ENCODE measurements at regions of chr11 and their contacts with region 1.

Region 1: DNA sequence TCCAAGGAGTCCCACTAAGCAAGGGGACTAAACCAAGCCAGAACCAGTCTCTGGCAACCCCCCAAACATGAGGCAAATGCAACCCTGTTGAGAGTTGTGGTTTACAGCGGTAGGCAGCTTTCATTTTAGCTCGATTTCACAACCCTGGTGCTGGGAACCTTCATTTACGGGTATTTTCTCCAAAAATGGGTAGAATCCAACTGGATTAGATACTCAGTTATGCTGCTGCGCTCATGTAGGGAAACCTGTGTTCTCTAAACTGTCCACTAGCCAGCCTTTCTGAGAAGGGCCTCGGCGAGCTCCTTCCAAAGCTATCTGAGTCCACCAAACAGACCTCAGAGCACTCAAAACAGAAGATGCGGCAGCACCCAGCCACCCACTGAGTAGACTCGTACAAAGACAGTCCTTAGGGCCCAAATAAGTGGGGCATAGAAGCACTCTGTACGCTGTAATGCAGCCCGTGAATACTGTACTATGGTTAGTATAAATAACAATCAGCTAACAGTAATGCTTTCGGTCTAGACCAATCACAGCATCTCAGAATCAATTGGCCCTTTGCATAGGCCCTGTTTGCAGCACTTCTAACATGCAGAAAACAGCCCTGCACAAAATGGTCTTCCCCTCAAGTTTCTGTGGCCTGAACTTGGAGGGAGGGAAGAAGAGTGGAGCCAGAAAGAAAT is 104.7 kb downstream of the ETS1 start:
- DNase-seq: no peak
- H3K4me3 ChIP-seq: no peak overlapping the region
- H3K27ac ChIP-seq: peak overlapping the region; percentile 3
- H3K4me1 ChIP-seq: peaks cover 24% of the 10 kb centered on the region
- H3K27me3 ChIP-seq: no peaks in the 10 kb centered on the region
- CTCF ChIP-seq: no peak

Region 2: GRCh38 chr11:128424851-128425285 is 57.8 kb before region 1 on chr11:
- CTCF ChIA-PET with region 1: no interaction called
- dilution Hi-C with region 1: loop called (anchors 5 kb)
- in situ Hi-C with region 1: no loop called
- intact Hi-C with region 1: no loop called
- DNase-seq: no peak
- H3K4me3 ChIP-seq: no peak overlapping the region
- H3K27ac ChIP-seq: no peak overlapping the region
- H3K4me1 ChIP-seq: no peaks in the 10 kb centered on the region
- H3K27me3 ChIP-seq: no peaks in the 10 kb centered on the region
- CTCF ChIP-seq: no peak

Region 3: DNA sequence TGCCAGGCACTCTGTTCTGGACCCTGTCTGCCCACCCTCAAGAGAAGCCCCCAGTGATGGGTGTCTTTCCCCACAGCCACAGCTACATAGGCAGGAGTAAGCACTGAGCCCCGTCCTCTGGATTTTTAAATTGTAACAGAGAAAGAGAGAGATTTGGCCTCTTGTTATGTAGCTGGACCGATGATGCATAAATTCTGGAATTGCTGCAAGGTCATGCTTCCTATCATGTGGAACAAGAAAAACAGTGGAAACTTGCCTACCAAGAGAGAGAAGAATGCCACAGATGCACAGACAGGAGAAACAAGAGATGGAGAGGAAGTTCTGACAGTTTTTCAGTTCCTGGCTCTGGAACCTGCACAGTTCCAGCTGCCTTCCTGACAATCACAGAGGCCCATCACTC is 45.5 kb before region 1 on chr11:
- CTCF ChIA-PET with region 1: no interaction called
- dilution Hi-C with region 1: no loop called
- in situ Hi-C with region 1: no loop called
- intact Hi-C with region 1: no loop called
- DNase-seq: no peak
- H3K4me3 ChIP-seq: no peak overlapping the region
- H3K27ac ChIP-seq: no peak overlapping the region
- H3K4me1 ChIP-seq: no peaks in the 10 kb centered on the region
- H3K27me3 ChIP-seq: no peaks in the 10 kb centered on the region
- CTCF ChIP-seq: no peak

Region 4: DNA sequence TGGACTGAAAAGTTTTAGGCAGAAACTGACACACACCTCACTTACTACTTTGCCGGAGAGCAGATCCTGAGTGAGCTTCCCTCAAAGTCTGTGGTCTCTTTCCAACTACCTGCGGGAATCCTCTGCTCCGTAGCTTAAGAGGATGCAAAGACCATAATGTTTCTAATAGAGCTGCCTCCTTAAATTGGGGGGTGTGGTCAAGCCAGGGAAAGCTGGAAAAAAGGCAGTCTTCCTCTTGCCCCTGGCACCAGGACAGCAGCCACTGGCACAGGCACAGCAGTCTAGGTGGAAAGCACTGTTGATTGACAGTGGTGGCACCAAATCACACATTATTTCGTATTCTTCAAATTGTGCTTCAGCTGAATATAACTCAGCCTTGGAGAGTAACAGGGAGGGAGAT is 104.8 kb after region 1 on chr11 and contains the start of gene ETS1:
- CTCF ChIA-PET with region 1: no interaction called
- dilution Hi-C with region 1: no loop called
- in situ Hi-C with region 1: no loop called
- intact Hi-C with region 1: no loop called
- DNase-seq: peak; percentile 36
- H3K4me3 ChIP-seq: peak within 1 kb of the TSS; percentile 38 to 50 (median 47)
- H3K27ac ChIP-seq: no peak within 1 kb of the TSS
- H3K4me1 ChIP-seq: peaks cover 19% of the 10 kb centered on the region
- H3K27me3 ChIP-seq: peaks cover 4% of the 10 kb centered on the region
- CTCF ChIP-seq: no peak
- total RNA-seq, gene ETS1: 53.0 to 115 TPM